Left ventricle myocardium inferior (tissue), 1 donor: ENCODE measurements at regions of chr17 and their contacts with region 1.

Region 1: DNA sequence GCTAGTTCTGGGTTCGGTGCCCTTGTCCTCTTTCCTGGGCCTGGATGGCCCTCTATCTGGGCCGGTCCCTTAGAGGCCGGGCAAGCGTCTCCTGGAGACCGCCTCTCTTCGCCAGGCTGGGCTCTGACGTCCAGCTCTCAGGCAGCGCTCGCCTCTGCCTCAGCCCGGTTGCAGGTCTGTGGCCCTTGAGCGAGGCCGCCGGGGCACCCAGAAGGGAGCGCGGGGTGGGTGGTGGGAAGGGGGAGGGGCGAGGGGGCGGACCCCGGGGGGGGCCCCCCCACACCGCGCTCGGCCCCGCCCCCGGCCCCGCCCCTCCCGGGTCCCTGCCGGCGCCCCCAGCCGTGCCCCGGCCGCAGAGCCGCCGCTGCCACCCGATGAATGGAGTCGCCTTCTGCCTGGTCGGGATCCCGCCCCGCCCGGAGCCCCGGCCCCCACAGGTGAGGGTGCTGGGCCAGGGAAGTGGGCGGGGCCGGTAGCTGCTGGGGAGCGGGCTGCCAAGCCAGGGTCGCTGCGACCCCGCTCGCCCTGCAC is at the start of gene ARHGAP23:
- DNase-seq: peak; percentile 77
- H3K4me3 ChIP-seq: peak within 1 kb of the TSS; percentile 89
- H3K27ac ChIP-seq: peak within 1 kb of the TSS; percentile 94
- H3K4me1 ChIP-seq: peaks cover 92% of the 10 kb centered on the region
- H3K27me3 ChIP-seq: no peaks in the 10 kb centered on the region
- CTCF ChIP-seq: no peak
- total RNA-seq, gene ARHGAP23: 60.8 TPM

Region 2: DNA sequence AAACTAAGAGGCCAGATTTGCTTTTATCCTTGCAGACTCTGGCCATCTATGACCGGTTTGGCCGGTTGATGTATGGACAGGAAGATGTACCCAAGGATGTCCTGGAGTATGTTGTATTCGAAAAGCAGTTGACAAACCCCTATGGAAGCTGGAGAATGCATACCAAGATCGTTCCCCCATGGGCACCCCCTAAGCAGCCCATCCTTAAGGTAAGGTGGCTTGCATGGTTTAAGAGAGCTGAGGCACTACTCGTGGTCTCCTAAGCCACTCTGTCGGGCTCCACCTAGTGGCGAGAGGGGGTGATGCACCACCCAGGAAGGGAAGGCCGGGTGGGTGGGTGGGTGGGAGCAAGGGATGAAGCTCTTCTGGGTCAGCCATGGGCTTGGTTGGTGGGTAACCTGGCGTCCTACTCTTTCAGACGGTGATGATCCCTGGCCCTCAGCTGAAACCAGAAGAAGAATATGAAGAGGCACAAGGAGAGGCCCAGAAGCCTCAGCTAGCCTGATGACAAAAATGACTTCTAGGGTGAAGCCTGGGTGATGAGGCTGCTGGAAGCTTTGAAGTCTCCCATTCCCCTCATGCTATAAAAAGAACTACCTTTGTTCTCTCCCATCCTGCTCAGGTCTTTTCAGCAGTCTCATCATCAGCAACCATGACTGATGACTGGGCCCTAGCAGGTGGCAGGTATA is 105.9 kb before region 1 on chr17:
- intact Hi-C with region 1: no loop called
- DNase-seq: peak; percentile 54
- H3K4me3 ChIP-seq: no peak overlapping the region
- H3K27ac ChIP-seq: no peak overlapping the region
- H3K4me1 ChIP-seq: peaks cover 13% of the 10 kb centered on the region
- H3K27me3 ChIP-seq: no peaks in the 10 kb centered on the region
- CTCF ChIP-seq: peak; percentile 89

Region 3: GRCh38 chr17:38485146-38485468 is 56.9 kb after region 1 on chr17:
- intact Hi-C with region 1: loop called (anchors 10 kb)
- DNase-seq: no peak
- H3K4me3 ChIP-seq: no peak overlapping the region
- H3K27ac ChIP-seq: peak overlapping the region; percentile 82
- H3K4me1 ChIP-seq: peaks cover 36% of the 10 kb centered on the region
- H3K27me3 ChIP-seq: no peaks in the 10 kb centered on the region
- CTCF ChIP-seq: no peak

Region 4: DNA sequence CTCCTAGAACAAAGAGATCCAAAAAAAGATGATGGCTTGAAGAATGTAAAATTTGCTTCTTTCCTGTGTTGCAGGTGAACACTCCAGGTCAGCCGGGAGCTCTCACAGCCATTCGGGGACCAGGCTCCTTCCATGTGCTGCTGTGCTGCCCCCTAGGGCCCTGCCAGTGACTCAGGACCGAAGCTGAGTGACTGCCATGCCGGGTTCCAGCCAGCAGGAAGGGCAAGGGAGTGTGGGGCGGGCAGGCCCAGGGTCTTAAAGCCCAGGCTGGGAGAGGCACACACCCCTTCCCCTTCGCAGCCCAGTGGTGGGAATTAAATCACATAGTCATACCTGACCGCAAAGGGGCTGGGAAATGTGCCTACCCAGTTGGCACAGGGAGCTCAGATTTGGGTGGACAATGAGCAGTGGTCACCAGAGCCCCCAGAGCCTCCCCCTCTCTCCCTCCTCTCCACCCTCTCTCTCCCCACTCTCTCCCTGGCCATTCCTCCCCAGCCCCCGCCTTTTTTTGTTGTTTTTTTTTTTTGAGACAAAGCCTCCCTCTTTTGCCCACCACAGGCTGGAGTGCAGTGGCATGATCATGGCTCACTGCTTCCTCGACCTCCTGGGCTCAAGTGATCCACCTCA is 235.1 kb after region 1 on chr17:
- intact Hi-C with region 1: no loop called
- DNase-seq: peak; percentile 46
- H3K4me3 ChIP-seq: no peak overlapping the region
- H3K27ac ChIP-seq: no peak overlapping the region
- H3K4me1 ChIP-seq: no peaks in the 10 kb centered on the region
- H3K27me3 ChIP-seq: peaks cover 21% of the 10 kb centered on the region
- CTCF ChIP-seq: peak; percentile 75